ENCODE measurements at regions of chr3 and their contacts with region 1.

Region 1: GRCh38 chr3:184371570-184372018 is 6.4 kb downstream of the THPO start:
- DNase-seq: peak; percentile 71 to 83
- ATAC-seq: peak; percentile 95 to 96
- H3K4me3 ChIP-seq: no peak overlapping the region
- H3K27ac ChIP-seq: no peak overlapping the region
- H3K4me1 ChIP-seq: peaks cover 7 to 13% of the 10 kb centered on the region in 2 donors
- H3K27me3 ChIP-seq: no peaks in the 10 kb centered on the region
- CTCF ChIP-seq: peak; percentile 86 to 98 (median 92)
- POLR2A ChIP-seq: no peak

Region 2: GRCh38 chr3:184513276-184514170 is 141.9 kb after region 1 on chr3:
- in situ Hi-C with region 1: loop called (anchors 5 to 10 kb)
- intact Hi-C with region 1: loop called (anchors 1 kb)
- DNase-seq: peak; percentile 69
- ATAC-seq: peak; percentile 98 to 99
- H3K4me3 ChIP-seq: peak overlapping the region; percentile 41 to 64 (median 52)
- H3K27ac ChIP-seq: peak overlapping the region in 1 of 4 donors; percentile 28
- H3K4me1 ChIP-seq: peaks cover 4 to 5% of the 10 kb centered on the region in 2 donors
- H3K27me3 ChIP-seq: peaks cover 19 to 37% (median 22%) of the 10 kb centered on the region in 3 donors
- CTCF ChIP-seq: peak; percentile 72 to 92 (median 88)
- POLR2A ChIP-seq: no peak

Region 3: DNA sequence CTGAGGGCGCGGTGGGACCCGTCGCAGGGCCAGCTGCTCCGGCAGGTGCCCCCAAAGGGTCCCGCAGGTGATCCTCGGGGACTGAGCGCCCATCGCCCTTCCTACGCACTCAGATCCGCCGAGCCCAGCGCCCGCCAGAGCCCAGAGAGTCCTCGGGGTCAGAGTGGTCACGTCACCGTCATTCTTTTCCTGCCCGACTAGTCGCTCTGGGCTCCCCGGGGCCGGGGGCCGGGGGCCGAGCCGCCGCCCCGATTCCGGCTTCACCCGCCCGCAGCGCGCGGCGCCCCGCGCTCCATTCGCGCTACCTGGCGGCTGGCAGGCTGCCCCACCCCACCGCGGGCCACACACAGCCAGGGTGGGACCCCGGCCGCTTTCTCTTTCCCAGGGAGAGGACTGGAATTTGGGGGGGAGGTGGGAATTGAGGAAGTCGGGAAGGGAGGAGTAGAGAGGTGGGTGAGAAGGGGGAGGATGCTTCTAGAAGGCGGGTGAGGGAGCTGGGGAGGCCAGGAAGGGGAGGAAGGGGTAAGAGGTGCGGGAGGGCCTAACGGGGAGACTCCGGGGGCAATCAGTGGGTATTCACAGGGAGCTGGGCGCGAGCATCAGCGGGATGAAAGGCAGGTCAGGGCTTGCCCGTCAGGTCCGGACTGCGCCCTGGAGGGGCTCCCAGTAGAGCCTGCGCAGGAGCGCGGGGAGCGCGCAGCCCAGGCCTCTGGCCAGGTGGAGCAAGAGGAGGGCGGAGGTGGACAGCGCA is 153.9 kb after region 1 on chr3:
- in situ Hi-C with region 1: no loop called
- intact Hi-C with region 1: no loop called
- DNase-seq: no peak
- ATAC-seq: peak in 1 of 2 donors; percentile 56
- H3K4me3 ChIP-seq: peak overlapping the region; percentile 42 to 56 (median 54)
- H3K27ac ChIP-seq: peak overlapping the region in 2 of 4 donors; percentile 59 to 61
- H3K4me1 ChIP-seq: peaks cover 0 to 6% of the 10 kb centered on the region in 2 donors
- H3K27me3 ChIP-seq: peaks cover 47 to 64% (median 56%) of the 10 kb centered on the region in 3 donors
- CTCF ChIP-seq: no peak
- POLR2A ChIP-seq: no peak

Region 4: GRCh38 chr3:184543843-184544512 is 172.4 kb after region 1 on chr3:
- in situ Hi-C with region 1: loop called in 3 of 4 experiments (anchors 5 to 10 kb)
- intact Hi-C with region 1: loop called (anchors 1 kb)
- DNase-seq: peak; percentile 44 to 58
- ATAC-seq: peak; percentile 85 to 93
- H3K4me3 ChIP-seq: peak overlapping the region in 2 of 4 donors; percentile 11 to 43
- H3K27ac ChIP-seq: no peak overlapping the region
- H3K4me1 ChIP-seq: no peaks in the 10 kb centered on the region
- H3K27me3 ChIP-seq: peaks cover 10 to 15% (median 14%) of the 10 kb centered on the region in 3 donors
- CTCF ChIP-seq: peak; percentile 80 to 98 (median 86)
- POLR2A ChIP-seq: no peak

Measured in gastrocnemius medialis (tissue), 4 donors.